HepG2 (cell line): ENCODE measurements at regions of chr14 and their contacts with region 1.

Region 1: GRCh38 chr14:93939304-93940229 is 12.4 kb downstream of the FAM181A start:
- DNase-seq: no peak
- ATAC-seq: peak; percentile 91
- H3K4me3 ChIP-seq: no peak overlapping the region
- H3K27ac ChIP-seq: no peak overlapping the region
- H3K4me1 ChIP-seq: peaks cover 25% of the 10 kb centered on the region
- H3K27me3 ChIP-seq: no peaks in the 10 kb centered on the region; a peak in 1 of 5 replicates
- CTCF ChIP-seq: peak; percentile 92
- EP300 ChIP-seq: no peak
- POLR2A ChIP-seq: no peak
- RAD21 ChIP-seq: peak; percentile 97

Region 2: GRCh38 chr14:93953263-93953662 is 13.7 kb after region 1 on chr14:
- CTCF ChIA-PET with region 1: interaction called, 4 read pairs
- POLR2A ChIA-PET with region 1: interaction called, 30 read pairs
- in situ Hi-C with region 1: no loop called
- intact Hi-C with region 1: no loop called
- DNase-seq: peak; percentile 50
- ATAC-seq: peak; percentile 85
- H3K4me3 ChIP-seq: peak overlapping the region; percentile 25 to 66 (median 58); a peak in 5 of 6 replicates
- H3K27ac ChIP-seq: no peak overlapping the region
- H3K4me1 ChIP-seq: peaks cover 61% of the 10 kb centered on the region
- H3K27me3 ChIP-seq: no peaks in the 10 kb centered on the region
- CTCF ChIP-seq: peak; percentile 79
- EP300 ChIP-seq: no peak
- POLR2A ChIP-seq: no peak
- RAD21 ChIP-seq: peak; percentile 72

Region 3: DNA sequence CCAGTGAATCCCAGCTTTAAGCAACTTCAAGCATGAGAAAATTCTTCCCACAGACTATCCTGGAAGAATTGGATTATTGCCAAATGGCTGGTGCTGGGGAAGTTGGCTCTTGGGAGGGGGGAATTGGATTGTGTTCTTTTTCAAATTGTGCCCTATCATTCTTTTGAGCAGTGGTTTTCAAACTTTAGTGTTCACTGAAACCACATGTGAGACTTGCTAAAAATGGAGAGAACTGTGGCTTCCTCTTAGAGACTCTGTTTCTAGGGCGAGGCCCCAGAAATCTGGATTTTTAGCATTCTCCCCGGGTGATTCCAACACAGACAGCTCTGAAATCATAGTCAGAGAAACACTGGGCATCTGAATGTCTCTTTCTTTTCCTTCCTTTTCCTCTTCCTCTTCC is 72.2 kb after region 1 on chr14:
- CTCF ChIA-PET with region 1: no interaction called
- POLR2A ChIA-PET with region 1: no interaction called
- in situ Hi-C with region 1: no loop called
- intact Hi-C with region 1: no loop called
- DNase-seq: no peak
- ATAC-seq: no peak
- H3K4me3 ChIP-seq: no peak overlapping the region
- H3K27ac ChIP-seq: no peak overlapping the region
- H3K4me1 ChIP-seq: peaks cover 26% of the 10 kb centered on the region
- H3K27me3 ChIP-seq: peaks cover 3 to 12% of the 10 kb centered on the region in 2 experiments; a peak in 3 of 5 replicates
- CTCF ChIP-seq: no peak
- EP300 ChIP-seq: no peak
- POLR2A ChIP-seq: no peak
- RAD21 ChIP-seq: no peak